Lower leg skin (tissue), 4 donors: ENCODE measurements at regions of chr9 and their contacts with region 1.

Region 1: DNA sequence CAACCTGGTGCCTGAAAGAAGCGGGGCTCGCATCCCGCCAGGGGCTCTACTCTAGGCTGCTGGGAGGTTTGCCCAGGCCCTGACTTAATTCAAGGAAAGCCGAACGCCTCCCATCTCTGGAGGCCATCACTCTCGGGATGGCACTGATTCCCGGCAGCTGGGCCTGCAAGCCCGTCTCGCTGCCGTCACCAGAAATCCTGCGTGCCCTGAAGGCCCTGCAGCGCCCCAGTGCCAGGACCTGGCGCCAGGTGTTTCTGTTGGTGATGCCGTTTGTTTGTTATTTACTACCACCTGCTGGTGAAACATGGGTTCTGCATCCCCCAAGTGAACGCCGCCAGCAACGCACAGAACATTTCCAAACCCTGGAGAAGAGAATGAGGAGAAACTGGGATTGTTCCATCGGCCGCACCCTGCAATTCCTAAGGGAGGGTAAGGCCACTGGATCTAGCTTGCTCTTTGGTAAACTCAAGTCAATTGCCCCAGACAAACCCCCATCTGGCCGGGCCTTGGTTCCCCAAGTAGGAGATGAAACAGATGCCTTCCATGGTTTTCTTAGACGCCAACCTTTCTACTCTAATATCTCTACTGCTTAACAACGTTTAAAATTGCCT is 77.9 kb downstream of the AK8 start:
- DNase-seq: peak; percentile 72 to 93
- H3K4me3 ChIP-seq: no peak overlapping the region
- CTCF ChIP-seq: peak in 1 of 3 donors; percentile 60
- POLR2A ChIP-seq: no peak

Region 2: DNA sequence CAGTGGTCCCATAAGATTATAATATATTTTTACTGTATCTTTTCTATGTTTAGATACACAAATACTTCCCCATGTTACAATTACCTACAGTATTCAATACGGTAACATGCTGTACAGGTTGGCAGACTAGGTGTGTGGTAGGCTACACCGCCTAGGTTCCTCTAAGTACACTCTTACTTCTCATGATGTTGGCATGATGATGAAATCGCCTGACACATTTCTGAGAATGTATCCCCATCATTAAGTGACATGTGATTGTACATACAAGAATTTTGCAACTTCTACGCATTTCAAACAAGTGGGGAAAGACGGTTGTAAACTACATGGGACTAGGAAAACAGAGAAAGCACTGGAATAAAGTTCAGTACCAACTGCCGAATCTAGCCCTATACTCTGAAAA is 498.6 kb before region 1 on chr9:
- intact Hi-C with region 1: no loop called
- DNase-seq: no peak
- H3K4me3 ChIP-seq: no peak overlapping the region
- CTCF ChIP-seq: no peak
- POLR2A ChIP-seq: no peak

Region 3: DNA sequence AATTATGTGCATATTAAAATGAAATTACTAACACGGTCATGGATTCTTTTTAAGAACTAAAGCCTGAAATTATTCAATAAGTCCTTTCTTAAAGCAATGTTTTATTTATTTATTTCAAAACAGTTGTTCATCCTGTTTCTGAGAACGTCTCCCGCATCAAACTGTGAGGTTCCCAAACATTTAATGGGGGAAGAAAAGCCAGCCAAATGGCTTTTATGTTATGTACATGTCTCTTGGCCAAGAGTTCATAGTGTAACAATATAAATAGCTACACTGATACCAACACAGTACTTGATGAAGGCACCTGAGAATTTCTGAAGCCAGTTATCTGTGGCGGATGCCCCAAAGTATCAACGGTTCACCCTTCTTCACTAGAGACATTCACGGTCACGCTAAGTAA is 409.2 kb before region 1 on chr9:
- intact Hi-C with region 1: no loop called
- DNase-seq: no peak
- H3K4me3 ChIP-seq: no peak overlapping the region
- CTCF ChIP-seq: no peak
- POLR2A ChIP-seq: no peak

Region 4: DNA sequence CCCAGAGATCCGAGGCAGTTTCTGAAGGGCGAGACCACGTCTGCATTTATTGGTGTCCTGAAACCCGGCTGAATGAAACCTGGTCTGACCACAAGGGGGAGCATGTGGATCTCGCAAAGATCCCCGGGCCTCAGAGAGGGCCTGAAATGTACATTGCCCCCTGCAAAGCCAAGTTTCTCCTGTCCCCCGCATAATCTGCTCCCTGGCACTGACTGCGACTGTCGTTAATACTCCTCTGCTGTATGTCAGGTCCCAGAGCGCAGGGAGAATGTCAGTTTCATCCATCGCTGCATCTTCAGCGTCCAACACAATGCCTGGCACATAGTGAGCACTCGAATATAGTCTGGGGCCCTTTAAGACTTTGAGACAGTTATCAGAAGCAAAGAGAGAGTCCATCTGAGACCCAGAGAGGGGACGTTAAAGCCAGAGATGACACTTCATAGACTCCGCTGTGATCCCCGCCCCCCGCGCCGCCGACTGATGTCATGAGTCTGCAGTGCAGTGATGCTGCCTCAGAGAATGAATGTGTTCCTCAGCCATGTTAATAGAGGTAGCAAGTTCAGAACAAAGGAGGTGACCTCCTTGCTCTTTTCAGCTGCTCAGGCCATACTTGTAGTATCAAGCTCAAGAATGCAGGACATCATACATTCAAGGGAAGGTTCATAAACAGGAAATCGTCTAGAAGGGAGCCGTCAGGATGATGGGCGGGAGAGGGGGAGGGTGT is 292.2 kb before region 1 on chr9:
- intact Hi-C with region 1: loop called (anchors 2 kb)
- DNase-seq: peak; percentile 45 to 92
- H3K4me3 ChIP-seq: no peak overlapping the region
- CTCF ChIP-seq: no peak
- POLR2A ChIP-seq: no peak

Region 5: DNA sequence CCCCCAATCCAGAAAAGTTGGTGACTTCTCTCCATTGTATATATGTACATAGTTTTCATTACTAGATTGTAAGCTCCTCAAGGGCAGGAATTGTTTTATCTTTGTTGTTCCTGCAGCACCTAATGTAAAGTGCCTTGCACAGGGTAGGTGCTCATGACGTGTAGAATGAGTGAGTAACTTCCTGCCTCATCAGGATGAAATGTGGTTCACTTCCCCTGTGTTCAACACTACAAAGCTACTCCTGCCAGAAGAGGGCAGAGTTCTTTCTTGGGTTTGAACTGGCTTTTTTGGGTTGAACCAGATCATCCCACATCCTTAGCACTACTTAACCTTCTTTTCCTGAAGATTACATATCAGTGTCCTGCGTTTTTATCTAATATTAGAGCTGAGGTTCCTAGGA is 106.0 kb before region 1 on chr9:
- intact Hi-C with region 1: loop called (anchors 10 kb)
- DNase-seq: no peak
- H3K4me3 ChIP-seq: no peak overlapping the region
- CTCF ChIP-seq: no peak
- POLR2A ChIP-seq: no peak

Region 6: DNA sequence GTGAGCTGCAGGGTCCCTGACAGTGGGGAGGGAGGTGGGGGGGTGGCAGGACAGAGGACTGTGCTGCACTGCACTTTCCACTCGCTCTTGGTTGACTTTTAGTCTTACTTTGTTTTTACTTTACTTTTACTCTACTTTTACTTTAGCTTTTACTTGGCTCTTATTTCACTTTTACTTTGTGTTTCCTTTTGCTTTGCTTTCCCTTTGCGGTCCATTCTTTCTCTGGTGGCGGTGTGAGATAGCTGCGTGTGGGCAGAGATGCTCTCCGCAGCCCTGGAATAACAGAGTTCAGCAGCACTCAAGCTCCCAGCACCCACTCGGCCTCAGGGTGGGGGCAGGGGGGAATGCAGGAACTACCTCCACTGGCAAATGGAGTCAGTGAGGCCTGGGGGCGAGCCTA is 73.3 kb after region 1 on chr9:
- intact Hi-C with region 1: no loop called
- DNase-seq: no peak
- H3K4me3 ChIP-seq: no peak overlapping the region
- CTCF ChIP-seq: no peak
- POLR2A ChIP-seq: no peak

Region 7: DNA sequence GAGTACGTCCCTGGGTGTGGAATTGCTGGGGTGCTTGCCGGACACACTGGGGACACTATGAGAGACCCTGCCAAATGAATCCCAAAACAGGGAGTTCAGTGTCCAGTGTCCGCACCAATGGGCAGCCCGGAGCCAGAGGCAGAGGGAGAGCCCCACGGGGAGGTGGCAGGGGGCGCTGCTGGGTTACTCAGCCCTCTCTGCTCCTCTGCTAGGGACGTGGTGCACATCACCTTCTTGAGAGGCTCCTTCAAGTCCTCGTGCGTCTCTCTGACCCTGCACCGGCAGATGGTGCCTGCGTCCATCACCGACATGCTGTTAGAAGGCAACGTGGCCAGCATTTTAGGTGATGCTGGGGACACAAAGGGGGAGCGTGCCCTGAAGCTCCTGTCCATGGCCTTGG is 596.8 kb after region 1 on chr9:
- intact Hi-C with region 1: no loop called
- DNase-seq: no peak
- H3K4me3 ChIP-seq: no peak overlapping the region
- CTCF ChIP-seq: no peak
- POLR2A ChIP-seq: no peak